ENCODE measurements at regions of chr11 and their contacts with region 1.

Region 1: DNA sequence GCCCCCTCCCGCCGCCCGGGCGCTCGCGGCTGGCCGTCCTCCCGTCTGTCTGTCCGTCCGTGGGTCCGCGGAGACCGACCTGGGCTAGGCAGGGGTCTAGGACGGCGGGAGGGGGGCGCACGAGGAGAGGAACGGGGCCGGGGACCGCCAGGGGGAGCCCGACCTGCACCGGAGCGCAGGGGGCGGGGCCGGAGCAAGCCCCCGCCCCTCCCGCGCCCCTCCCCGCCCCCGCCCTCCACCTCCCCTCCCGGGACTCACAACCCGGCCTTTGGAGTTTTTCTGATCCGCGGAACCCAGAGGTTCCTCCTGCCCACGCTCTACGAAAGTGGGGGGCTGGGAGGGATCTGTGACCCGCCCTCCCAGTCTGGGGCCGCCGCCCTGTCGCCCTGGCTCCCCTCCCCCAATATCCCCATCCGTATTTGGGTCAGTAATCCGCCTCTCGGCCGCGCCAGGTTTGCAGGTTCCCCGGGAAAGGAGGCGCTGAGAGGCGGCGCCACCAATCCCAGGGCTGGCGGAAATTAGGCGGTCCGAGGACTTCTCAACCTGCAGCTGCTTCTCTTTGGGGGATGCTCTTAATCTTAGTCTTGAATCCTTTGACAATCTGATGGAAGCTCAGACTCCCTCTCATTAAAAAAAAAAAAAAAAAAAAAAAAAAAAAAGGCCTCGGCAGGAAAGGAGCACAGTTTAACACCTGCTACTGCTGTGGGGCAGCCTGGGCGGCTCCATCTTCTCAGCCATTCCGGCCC is 925 bp upstream of the KCNJ11 start:
- DNase-seq: no peak
- ATAC-seq: peak; percentile 78
- H3K4me3 ChIP-seq: peak overlapping the region; percentile 46 to 57
- H3K27ac ChIP-seq: no peak overlapping the region
- H3K4me1 ChIP-seq: no peaks in the 10 kb centered on the region
- H3K27me3 ChIP-seq: no peaks in the 10 kb centered on the region
- CTCF ChIP-seq: peak; percentile 93

Region 2: DNA sequence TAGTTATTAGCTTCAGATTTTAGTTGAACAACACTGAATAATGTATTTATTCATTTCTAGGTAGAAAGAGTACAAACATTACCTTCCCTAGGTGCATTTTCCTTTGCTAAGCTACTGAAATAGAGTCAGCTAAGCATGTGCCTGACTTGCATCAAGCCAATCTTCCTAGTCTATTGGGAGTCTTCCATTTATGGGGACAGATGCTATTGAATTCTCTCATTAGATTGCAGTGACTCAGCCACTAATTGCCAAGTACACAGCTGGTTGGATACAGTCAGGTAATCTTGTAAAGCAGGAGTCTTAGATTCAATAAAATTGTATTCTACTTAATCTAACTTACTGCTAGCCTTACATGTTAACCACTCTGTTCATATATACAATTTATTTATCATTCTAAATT is 256.7 kb before region 1 on chr11:
- CTCF ChIA-PET with region 1: no interaction called
- POLR2A ChIA-PET with region 1: no interaction called
- in situ Hi-C with region 1: no loop called
- intact Hi-C with region 1: no loop called
- DNase-seq: no peak
- ATAC-seq: no peak
- H3K4me3 ChIP-seq: no peak overlapping the region
- H3K27ac ChIP-seq: no peak overlapping the region
- H3K4me1 ChIP-seq: no peaks in the 10 kb centered on the region
- H3K27me3 ChIP-seq: no peaks in the 10 kb centered on the region
- CTCF ChIP-seq: no peak

Region 3: GRCh38 chr11:17457396-17458173 is 68.2 kb after region 1 on chr11:
- CTCF ChIA-PET with region 1: interaction called, 3 read pairs
- POLR2A ChIA-PET with region 1: interaction called, 12 read pairs
- in situ Hi-C with region 1: no loop called
- intact Hi-C with region 1: no loop called
- DNase-seq: no peak
- ATAC-seq: no peak
- H3K4me3 ChIP-seq: no peak overlapping the region
- H3K27ac ChIP-seq: no peak overlapping the region
- H3K4me1 ChIP-seq: no peaks in the 10 kb centered on the region
- H3K27me3 ChIP-seq: peaks cover 2% of the 10 kb centered on the region; the same call in 1 of the 2 replicates
- CTCF ChIP-seq: no peak

Region 4: DNA sequence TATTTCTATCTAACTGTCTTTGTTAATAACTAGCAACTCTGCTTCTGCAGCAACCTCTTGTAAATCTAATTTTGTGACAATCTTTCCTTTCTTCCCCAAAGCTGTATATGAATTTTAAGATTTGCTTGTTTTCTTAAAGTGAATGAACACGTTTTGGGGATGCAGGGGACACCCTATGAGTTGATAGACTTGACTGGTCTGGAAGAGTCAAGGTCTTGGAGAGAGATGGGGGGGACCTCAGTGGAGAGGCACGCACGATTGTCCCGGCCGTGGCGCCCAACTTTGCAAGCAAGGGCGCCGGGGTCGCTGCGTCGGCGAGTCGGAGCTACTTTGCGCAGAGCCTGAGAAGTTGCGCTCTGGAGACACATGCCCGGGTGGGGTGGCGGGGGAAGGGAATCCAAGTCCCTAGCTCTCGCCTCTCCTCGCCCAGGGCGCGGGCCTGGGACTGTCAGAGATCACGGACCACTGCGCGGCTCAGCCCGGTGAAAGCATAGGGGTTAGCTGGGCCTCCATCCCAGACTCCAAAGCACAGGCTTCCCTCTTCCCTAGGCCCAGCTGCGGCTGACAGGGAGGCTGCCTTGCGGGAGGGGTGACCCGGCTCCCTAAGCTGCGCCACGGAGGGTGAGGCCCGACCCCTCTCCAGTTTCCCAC is 86.4 kb after region 1 on chr11:
- CTCF ChIA-PET with region 1: interaction called, 4 read pairs
- POLR2A ChIA-PET with region 1: interaction called, 14 read pairs
- in situ Hi-C with region 1: no loop called
- intact Hi-C with region 1: no loop called
- DNase-seq: no peak
- ATAC-seq: peak; percentile 26; the same call in 1 of the 2 replicates
- H3K4me3 ChIP-seq: peak overlapping the region; percentile 38 to 40
- H3K27ac ChIP-seq: no peak overlapping the region
- H3K4me1 ChIP-seq: no peaks in the 10 kb centered on the region
- H3K27me3 ChIP-seq: peaks cover 20% of the 10 kb centered on the region
- CTCF ChIP-seq: no peak